GM12878 (cell line): ENCODE measurements at regions of chr17 and their contacts with region 1.

Region 1: GRCh38 chr17:19306160-19307111 is 56.1 kb downstream of the B9D1 start:
- DNase-seq: peak; percentile 94
- ATAC-seq: peak; percentile 85
- H3K4me3 ChIP-seq: no peak overlapping the region; the same call in 1 of the 2 replicates
- H3K27ac ChIP-seq: peak overlapping the region; percentile 9; the same call in 1 of the 2 replicates
- H3K4me1 ChIP-seq: peaks cover 46% of the 10 kb centered on the region
- H3K27me3 ChIP-seq: no peaks in the 10 kb centered on the region; a peak in 1 of 4 replicates
- CTCF ChIP-seq: no peak
- EP300 ChIP-seq: peak; percentile 79 to 92; a peak in 3 of 4 replicates
- POLR2A ChIP-seq: no peak; the same call in 1 of the 2 replicates
- RAD21 ChIP-seq: no peak

Region 2: DNA sequence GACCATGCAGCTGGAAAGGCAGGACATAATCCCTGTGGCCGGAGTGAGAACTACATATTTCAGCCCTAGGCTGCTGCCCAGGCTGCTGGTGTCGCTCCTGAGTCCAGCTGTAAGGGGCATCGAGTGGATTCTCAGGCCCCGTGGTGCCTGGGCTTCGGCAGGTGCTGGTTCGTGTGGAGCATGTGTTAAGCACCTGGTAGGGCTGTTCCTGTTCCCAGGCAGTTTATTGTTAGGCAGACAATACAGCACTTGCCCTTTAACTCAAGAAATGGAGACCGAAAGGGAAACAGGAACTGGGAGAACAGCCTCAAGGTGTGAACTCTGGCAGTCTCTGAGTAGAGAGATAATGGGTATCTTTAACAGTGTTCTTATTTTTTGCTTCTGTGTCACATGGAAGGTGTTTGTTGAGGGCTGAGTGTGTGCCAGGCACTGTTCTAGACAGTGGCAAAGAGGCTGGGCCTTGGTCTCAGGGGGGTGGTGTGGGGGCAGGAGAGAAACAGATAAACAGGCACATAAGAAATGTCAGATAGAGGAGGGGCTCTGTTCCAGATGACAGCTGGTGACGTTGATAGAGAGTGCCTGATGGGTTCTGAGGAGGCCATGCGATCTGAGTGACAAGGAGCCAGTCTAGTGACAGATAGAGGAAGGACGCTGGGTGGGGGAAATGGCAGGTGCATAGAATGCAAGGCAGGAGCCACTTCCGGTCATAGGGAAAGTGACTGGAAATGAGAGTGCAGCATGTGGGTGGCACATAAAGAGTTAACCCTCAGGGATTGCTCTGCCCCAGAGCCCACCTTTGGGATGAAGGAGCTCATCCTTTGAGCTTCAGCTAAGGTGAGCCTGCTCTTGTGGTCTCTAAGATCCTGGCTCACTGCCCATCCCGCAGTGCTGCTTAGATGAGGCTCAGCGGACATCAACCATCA is 35.5 kb before region 1 on chr17:
- CTCF ChIA-PET with region 1: interaction called, 3 read pairs
- POLR2A ChIA-PET with region 1: interaction called, 3 read pairs
- RAD21 ChIA-PET with region 1: no interaction called
- SMC1A ChIA-PET with region 1: interaction called, 11 read pairs
- in situ Hi-C with region 1: no loop called
- intact Hi-C with region 1: no loop called
- DNase-seq: peak; percentile 37
- ATAC-seq: peak; percentile 92
- H3K4me3 ChIP-seq: no peak overlapping the region
- H3K27ac ChIP-seq: no peak overlapping the region; the same call in 1 of the 2 replicates
- H3K4me1 ChIP-seq: peaks cover 18% of the 10 kb centered on the region
- H3K27me3 ChIP-seq: no peaks in the 10 kb centered on the region
- CTCF ChIP-seq: 0 out of 6 replicates have a peak, but pooled peaks of 1 of the 3 experiments have one; percentile 11
- EP300 ChIP-seq: peak in 1 of 2 experiments; percentile 47; a peak in 1 of 4 replicates
- POLR2A ChIP-seq: no peak
- RAD21 ChIP-seq: no peak